ENCODE measurements at regions of chr9 and their contacts with region 1.

Region 1: DNA sequence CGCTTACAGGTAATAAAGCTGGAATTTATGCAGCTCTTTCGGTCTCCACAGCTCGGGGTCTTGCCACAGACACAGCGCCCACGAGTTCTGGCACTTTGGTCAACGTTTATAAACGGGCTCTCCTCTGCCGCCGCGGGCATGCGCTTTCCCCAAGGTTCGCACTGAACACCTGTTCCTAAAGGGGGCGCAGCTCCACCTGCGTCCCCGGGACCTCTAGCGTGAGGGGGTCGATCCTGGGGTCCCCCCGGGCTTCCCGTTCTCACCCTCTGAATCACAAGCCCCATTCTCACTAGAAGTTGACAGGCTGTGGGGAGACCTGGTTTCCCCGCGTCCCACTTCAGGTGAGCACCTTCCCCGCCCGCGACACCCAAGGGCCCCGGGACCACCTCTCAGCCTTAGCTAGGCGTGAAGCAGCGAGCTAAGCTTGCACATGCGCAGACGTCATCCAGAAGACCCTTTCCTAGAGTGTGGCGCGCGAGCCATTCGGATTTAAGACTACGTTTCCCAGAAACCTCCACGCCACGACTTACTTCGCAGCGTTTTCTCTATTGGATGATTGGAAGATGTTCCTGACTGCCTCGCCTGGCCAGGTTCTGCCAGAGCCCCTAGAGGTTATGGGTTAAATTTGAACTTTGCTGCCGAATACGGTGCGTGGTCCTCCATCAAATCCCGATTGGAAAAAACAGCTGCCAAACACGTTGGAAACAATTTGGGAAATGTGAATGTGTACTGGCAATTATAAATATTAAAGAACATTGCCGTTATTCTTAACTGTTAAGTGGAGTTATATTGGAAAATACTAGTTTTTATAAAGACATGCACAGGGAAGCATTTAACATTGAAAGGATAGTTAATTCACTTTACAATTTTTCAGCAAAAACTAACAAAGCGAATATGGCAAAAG is 21.4 kb upstream of the ZNF782 start:
- DNase-seq: peak; percentile 74
- H3K4me3 ChIP-seq: peak overlapping the region; percentile 65 to 88 (median 67)
- H3K27ac ChIP-seq: peak overlapping the region; percentile 92
- H3K4me1 ChIP-seq: peaks cover 22% of the 10 kb centered on the region
- H3K27me3 ChIP-seq: no peaks in the 10 kb centered on the region
- CTCF ChIP-seq: peak; percentile 18 to 51

Region 2: DNA sequence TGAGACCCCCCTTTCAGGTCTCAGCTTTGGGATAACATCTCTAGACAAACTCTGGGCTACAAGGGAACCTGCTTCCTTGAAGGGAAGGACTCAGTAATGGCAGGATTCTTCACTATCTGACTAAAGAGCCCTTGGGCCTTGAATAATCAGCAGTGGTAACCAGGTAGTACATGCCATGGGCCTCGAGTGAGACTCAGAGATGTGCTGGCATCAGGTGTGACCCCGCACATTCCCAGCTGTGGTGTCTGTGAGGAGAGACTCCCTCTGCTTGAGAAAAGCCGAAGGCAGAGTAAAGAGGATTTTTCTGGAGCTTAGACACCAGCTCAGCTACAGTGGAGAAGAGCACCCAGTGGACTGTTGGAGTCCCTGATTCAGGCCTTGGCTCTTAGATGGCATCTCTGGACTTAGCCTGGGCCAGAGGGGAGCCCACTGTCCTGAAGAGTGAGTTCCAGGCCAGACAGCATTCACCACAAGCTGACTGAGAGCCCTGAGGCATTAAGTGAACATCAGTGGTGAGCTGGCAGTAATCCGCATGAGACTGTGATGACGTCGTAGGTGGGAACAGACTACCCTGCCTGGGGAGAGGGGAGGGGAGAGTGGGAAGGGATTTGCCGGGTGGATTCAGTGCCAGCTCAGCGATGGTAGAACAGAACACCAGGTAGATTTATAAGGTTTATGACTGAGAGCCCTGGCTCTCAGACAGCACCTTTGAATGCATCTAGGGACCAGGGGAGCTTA is 16.1 kb before region 1 on chr9:
- CTCF ChIA-PET with region 1: no interaction called
- dilution Hi-C with region 1: no loop called
- in situ Hi-C with region 1: no loop called
- intact Hi-C with region 1: loop called (anchors 2 kb)
- DNase-seq: peak; percentile 98
- H3K4me3 ChIP-seq: no peak overlapping the region
- H3K27ac ChIP-seq: peak overlapping the region; percentile 44
- H3K4me1 ChIP-seq: peaks cover 32% of the 10 kb centered on the region
- H3K27me3 ChIP-seq: no peaks in the 10 kb centered on the region
- CTCF ChIP-seq: no peak

Region 3: DNA sequence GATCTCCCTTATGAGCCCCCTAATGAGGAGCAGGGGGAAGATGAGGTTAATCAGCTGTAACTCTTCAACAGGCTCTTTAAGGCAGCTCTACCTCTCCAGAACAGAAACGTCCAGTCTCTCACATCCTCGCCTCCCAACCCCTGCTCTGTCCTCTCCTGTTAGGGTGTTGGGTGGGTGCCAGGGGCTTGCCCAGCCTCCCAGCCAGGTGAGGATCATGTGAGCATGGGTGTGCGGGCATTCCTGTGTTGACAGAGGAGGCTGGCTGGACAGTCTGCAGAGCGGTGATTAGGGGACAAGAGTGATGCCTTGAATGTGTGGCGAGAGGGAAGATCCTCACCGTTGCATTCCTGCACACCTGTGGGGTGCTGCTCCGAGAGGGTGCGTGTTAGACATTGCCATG is 483.4 kb after region 1 on chr9:
- CTCF ChIA-PET with region 1: no interaction called
- dilution Hi-C with region 1: no loop called
- in situ Hi-C with region 1: no loop called
- intact Hi-C with region 1: no loop called
- DNase-seq: no peak
- H3K4me3 ChIP-seq: no peak overlapping the region
- H3K27ac ChIP-seq: no peak overlapping the region
- H3K4me1 ChIP-seq: no peaks in the 10 kb centered on the region
- H3K27me3 ChIP-seq: no peaks in the 10 kb centered on the region
- CTCF ChIP-seq: no peak